Lower leg skin (tissue), 4 donors: ENCODE measurements at regions of chr11 and their contacts with region 1.

Region 1: GRCh38 chr11:96342961-96343711 is at the start of gene MAML2:
- DNase-seq: peak; percentile 94 to 98
- H3K4me3 ChIP-seq: peak within 1 kb of the TSS; percentile 54
- CTCF ChIP-seq: peak in 1 of 3 donors; percentile 68
- POLR2A ChIP-seq: no peak
- total RNA-seq, gene MAML2: 17.6 to 31.6 (median 25.8) TPM

Region 2: DNA sequence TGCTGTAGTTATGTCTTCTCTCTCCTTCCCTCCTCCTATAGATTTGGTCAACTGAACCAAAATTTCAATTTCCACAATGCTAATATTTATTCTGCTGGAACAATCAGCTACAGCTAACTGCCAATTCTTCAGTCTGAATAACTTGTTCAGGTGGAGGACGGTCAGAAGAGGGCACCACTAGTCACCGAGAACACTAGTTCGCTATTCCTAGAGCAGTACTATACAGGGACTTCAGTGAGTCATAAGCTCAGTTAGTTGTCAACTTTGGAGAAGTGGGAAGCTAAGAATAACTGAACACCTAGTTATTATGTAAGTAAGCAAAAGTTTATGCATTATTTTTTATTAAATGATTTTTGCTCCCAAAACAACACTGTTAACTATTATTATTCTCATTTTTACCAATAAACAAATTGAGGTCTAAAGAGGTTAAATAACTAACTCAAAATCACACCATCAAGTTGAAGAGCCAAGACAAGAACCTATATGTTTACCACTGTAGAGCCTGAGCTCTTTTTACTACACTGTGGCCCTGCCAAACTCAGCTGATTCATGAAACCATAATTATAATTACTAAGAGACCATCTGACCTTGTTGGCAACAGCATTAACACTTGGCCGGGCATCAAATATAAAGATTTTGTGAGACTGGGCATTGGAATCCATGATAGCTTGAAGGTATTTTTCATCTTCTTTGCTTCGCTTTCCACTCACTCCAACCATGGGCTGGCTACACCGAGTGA is 493.9 kb before region 1 on chr11:
- intact Hi-C with region 1: loop called (anchors 5 kb)
- DNase-seq: peak; percentile 30 to 84
- H3K4me3 ChIP-seq: no peak overlapping the region
- CTCF ChIP-seq: peak in 1 of 3 donors; percentile 32
- POLR2A ChIP-seq: no peak

Region 3: DNA sequence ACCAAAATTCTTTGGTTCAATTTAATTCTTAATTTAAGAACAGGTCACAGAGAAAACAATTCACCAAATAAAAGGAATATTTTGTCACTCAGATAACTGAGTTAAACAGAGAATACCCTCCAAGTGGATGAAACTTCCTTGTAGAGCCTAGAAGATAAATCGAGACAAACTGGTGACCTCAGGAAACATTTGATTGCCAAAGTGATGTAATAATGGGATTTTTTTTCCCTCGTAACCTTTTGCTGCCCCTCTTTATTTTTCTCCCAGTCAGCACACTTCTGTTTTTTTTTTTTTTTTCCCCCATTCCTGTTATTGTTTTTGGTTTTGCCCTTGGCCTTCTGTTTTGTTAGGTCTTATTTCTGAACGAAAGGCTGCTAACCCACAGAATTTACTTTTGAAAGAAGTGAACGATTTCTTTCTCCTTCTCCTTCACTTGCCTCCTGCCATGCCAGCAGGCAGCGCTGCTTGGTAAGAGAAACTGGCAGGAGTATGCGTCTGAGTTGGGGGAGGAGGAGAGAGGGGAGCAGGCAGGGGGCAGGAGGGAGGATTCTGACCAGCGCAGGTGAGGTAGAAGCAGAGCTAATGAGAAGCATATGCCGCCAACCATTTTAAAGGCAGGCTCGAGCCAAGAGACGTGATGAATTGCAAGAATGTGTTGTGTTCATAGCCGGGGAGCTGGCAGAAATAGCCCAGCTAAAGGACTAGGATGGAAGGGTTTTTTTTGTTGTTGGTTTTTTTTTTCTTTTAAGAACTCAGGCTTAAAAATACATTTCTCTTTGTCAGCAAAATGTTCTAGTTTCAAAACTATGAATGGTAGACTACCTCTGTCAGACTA is 297.3 kb before region 1 on chr11:
- intact Hi-C with region 1: loop called (anchors 5 kb)
- DNase-seq: peak in 1 of 2 donors; percentile 33
- H3K4me3 ChIP-seq: no peak overlapping the region
- CTCF ChIP-seq: no peak
- POLR2A ChIP-seq: no peak

Region 4: DNA sequence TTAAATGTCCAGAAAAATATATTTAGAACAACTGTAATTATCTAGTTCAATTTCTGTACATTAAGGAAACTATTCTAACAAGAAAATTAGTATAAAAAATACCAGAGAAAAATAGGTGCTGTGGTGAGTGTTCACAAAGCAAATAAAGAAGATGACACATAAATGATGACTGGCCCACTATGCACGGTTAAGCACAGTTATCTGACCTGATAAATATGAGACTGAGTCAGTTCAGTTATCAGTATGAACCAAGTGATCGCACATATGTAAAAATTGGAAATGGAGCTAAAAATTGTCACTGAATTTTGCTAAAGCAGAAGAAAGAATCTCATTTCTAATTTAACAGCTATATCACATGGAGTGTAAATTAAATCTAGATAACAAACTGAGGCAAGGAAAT is 18.6 kb after region 1 on chr11:
- intact Hi-C with region 1: no loop called
- DNase-seq: no peak
- H3K4me3 ChIP-seq: no peak overlapping the region
- CTCF ChIP-seq: no peak
- POLR2A ChIP-seq: no peak

Region 5: DNA sequence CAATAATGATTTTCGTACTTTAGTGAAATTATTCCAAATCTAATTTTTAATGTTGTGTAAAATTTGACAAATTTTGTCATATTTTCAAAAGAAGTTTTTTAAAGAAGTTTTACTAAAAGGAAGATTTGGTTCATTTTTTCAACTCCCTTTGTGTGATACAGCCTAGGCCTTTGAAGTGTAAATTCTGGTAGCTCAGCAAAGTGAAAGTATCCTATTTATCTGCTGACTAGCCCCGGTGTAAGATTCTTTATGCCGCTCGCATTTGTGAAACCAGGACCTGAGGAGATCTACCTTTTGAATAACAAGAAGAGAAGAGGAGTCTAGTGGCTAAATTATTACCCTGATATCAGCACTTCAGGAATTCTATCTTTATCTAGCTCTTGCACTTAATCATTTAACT is 224.0 kb after region 1 on chr11:
- intact Hi-C with region 1: no loop called
- DNase-seq: no peak
- H3K4me3 ChIP-seq: no peak overlapping the region
- CTCF ChIP-seq: no peak
- POLR2A ChIP-seq: no peak